SK-N-SH (cell line): ENCODE measurements at regions of chr4 and their contacts with region 1.

Region 1: GRCh38 chr4:99998062-99998867 is 48.2 kb upstream of the H2AZ1 start:
- DNase-seq: peak; percentile 27
- H3K4me3 ChIP-seq: no peak overlapping the region
- H3K27ac ChIP-seq: peak overlapping the region; percentile 60 to 69
- H3K4me1 ChIP-seq: peaks cover 4 to 9% of the 10 kb centered on the region in 2 experiments; a peak in 2 of 4 replicates
- H3K27me3 ChIP-seq: no peaks in the 10 kb centered on the region
- CTCF ChIP-seq: peak; percentile 70
- EP300 ChIP-seq: no peak
- RAD21 ChIP-seq: peak; percentile 77

Region 2: DNA sequence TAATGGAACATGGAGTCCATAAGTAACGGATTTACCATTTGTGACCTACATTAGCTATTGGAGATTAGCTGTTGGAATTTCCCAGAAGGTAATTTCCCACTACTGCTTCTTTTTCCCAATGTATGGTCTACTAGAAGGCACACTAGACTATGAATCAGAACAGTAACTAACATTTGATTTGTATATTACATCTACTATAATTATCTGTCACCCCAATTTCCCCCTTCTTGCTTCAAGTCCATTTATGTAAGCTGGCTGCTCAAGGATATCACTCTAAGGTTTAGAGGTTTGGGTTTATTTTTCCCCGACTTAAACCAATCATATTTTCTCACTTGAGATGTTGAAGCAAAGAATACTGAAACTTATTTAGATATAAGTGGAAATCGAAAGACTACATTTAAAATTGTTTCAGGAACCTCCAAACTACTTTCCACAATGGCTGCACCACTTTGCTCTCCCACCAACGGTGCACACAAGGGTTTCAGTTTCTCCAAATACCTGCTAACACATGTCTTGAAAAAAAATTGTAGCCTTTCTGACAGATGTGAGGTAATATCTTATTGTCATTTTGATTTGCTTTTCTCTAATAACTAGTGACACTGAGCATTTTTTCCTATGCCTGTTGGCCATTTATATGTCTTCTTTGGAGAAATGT is 14.8 kb before region 1 on chr4:
- CTCF ChIA-PET with region 1: interaction called, 24 read pairs
- POLR2A ChIA-PET with region 1: no interaction called
- DNase-seq: no peak
- H3K4me3 ChIP-seq: no peak overlapping the region
- H3K27ac ChIP-seq: no peak overlapping the region
- H3K4me1 ChIP-seq: peaks cover 0 to 4% of the 10 kb centered on the region in 2 experiments; a peak in 1 of 4 replicates
- H3K27me3 ChIP-seq: no peaks in the 10 kb centered on the region
- CTCF ChIP-seq: no peak
- EP300 ChIP-seq: no peak
- RAD21 ChIP-seq: no peak

Region 3: GRCh38 chr4:100054071-100054470 is 55.8 kb after region 1 on chr4:
- CTCF ChIA-PET with region 1: interaction called, 11 read pairs
- POLR2A ChIA-PET with region 1: no interaction called
- DNase-seq: no peak
- H3K4me3 ChIP-seq: no peak overlapping the region
- H3K27ac ChIP-seq: no peak overlapping the region
- H3K4me1 ChIP-seq: no peaks in the 10 kb centered on the region
- H3K27me3 ChIP-seq: no peaks in the 10 kb centered on the region
- CTCF ChIP-seq: no peak
- EP300 ChIP-seq: no peak
- RAD21 ChIP-seq: no peak

Region 4: DNA sequence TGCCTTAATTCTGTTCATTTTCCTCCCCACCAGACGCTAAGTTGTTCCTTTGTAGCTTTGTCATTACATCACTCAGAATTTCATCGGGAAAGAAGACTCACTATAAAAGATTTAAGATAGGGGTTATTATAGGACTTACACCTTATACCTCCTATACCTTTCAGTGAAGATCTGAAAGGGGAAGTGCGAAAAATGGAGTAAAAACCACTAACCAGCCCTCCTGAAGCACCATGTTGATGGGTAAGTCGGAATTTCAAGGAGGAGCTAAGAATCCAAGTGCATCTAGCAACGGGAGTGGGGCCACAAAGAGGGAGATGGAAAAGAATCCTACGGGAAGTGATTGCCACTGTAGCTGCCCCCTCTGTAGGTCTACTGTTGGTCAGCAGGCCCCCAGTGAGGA is 70.9 kb after region 1 on chr4:
- CTCF ChIA-PET with region 1: interaction called, 44 read pairs
- POLR2A ChIA-PET with region 1: no interaction called
- DNase-seq: no peak
- H3K4me3 ChIP-seq: no peak overlapping the region
- H3K27ac ChIP-seq: no peak overlapping the region
- H3K4me1 ChIP-seq: no peaks in the 10 kb centered on the region
- H3K27me3 ChIP-seq: no peaks in the 10 kb centered on the region
- CTCF ChIP-seq: no peak
- EP300 ChIP-seq: no peak
- RAD21 ChIP-seq: no peak

Region 5: GRCh38 chr4:100100985-100101384 is 102.7 kb after region 1 on chr4:
- CTCF ChIA-PET with region 1: interaction called, 109 read pairs
- POLR2A ChIA-PET with region 1: no interaction called
- DNase-seq: no peak
- H3K4me3 ChIP-seq: no peak overlapping the region
- H3K27ac ChIP-seq: no peak overlapping the region
- H3K4me1 ChIP-seq: no peaks in the 10 kb centered on the region; a peak in 2 of 4 replicates
- H3K27me3 ChIP-seq: no peaks in the 10 kb centered on the region
- CTCF ChIP-seq: no peak
- EP300 ChIP-seq: no peak
- RAD21 ChIP-seq: no peak